ENCODE measurements at regions of chr2 and their contacts with region 1.

Region 1: GRCh38 chr2:55732854-55733253 is 39.2 kb upstream of the PNPT1 start:
- DNase-seq: no peak
- H3K4me3 ChIP-seq: no peak overlapping the region
- H3K27ac ChIP-seq: peak overlapping the region; percentile 13 to 75
- H3K4me1 ChIP-seq: no peaks in the 10 kb centered on the region
- H3K27me3 ChIP-seq: no peaks in the 10 kb centered on the region
- CTCF ChIP-seq: no peak
- POLR2A ChIP-seq: no peak

Region 2: GRCh38 chr2:55239656-55240222 is 493.1 kb before region 1 on chr2:
- intact Hi-C with region 1: no loop called
- DNase-seq: no peak
- H3K4me3 ChIP-seq: no peak overlapping the region
- H3K27ac ChIP-seq: no peak overlapping the region
- H3K4me1 ChIP-seq: no peaks in the 10 kb centered on the region
- H3K27me3 ChIP-seq: no peaks in the 10 kb centered on the region
- CTCF ChIP-seq: no peak
- POLR2A ChIP-seq: no peak

Region 3: GRCh38 chr2:55653251-55653650 is 79.6 kb before region 1 on chr2:
- intact Hi-C with region 1: no loop called
- DNase-seq: no peak
- H3K4me3 ChIP-seq: no peak overlapping the region
- H3K27ac ChIP-seq: no peak overlapping the region
- H3K4me1 ChIP-seq: no peaks in the 10 kb centered on the region
- H3K27me3 ChIP-seq: no peaks in the 10 kb centered on the region
- CTCF ChIP-seq: no peak
- POLR2A ChIP-seq: no peak

Region 4: DNA sequence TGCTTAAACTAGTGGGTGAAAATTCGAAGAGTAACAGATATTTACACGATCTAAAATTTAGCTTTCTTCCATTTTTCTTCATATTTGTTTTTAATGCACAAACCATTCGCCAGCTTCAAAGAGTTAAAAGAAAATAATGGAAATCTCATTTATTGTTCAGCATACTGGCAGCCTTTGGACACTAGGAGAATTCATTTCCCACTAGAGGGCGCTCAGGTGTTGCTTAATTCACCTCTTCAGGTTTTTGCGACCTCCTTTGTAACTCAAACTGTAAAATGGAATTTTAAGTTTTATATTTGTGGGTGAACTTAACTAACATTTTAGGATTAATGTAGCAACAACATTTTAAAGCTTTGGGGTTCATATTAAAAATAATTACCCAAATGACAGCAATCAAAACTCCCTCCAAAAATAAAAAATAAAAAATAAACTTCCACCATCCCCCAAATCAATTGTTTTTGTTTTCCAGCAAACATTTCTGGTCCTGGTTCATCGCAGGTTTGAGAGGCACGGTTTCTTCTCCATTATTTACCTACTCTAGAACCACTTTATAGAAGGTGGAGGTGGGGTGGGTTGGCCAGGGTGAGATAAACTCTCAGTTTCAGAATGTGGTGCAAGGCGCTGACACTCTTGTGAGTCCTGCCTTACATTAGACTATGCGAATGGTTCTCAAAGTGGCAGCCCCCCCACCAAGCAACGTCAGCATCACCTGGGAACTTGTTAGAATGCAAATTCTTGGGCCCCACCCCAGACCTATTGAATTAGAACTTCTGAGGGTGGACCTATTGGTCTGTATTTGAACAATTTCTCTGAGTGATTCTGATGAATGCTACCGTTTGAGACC is 14.5 kb before region 1 on chr2:
- intact Hi-C with region 1: loop called (anchors 1 kb)
- DNase-seq: peak in 1 of 2 donors; percentile 32
- H3K4me3 ChIP-seq: no peak overlapping the region
- H3K27ac ChIP-seq: no peak overlapping the region
- H3K4me1 ChIP-seq: no peaks in the 10 kb centered on the region
- H3K27me3 ChIP-seq: no peaks in the 10 kb centered on the region
- CTCF ChIP-seq: peak; percentile 37 to 82 (median 69)
- POLR2A ChIP-seq: no peak